Activated T-helper 1 cell treated with anti-CD3 and anti-CD28 coated beads, Interleukin-12 subunit alpha, Interleukin-12 subunit beta, Interleukin-2, Interleukin-4 antibody, amounts not matched to agents 30 ng/mL and 10 ng/mL and 1 ng/mL, durations not matched to agents 14 hours and 24 hours and 36 hours (primary cell): ENCODE measurements at regions of chr1 and their contacts with region 1.

Region 1: GRCh38 chr1:39711104-39711965 is 20.1 kb upstream of the HPCAL4 start:
- DNase-seq: no peak
- H3K4me3 Mint-ChIP-seq: no peak overlapping the region
- H3K27ac Mint-ChIP-seq: no peak overlapping the region
- H3K4me1 Mint-ChIP-seq: no peaks in the 10 kb centered on the region
- H3K27me3 Mint-ChIP-seq: peaks cover 19% of the 10 kb centered on the region

Region 2: GRCh38 chr1:38915352-38915948 is 795.9 kb before region 1 on chr1:
- intact Hi-C with region 1: no loop called
- DNase-seq: no peak
- H3K4me3 Mint-ChIP-seq: no peak overlapping the region
- H3K27ac Mint-ChIP-seq: no peak overlapping the region
- H3K4me1 Mint-ChIP-seq: no peaks in the 10 kb centered on the region
- H3K27me3 Mint-ChIP-seq: no peaks in the 10 kb centered on the region

Region 3: GRCh38 chr1:39098546-39099250 is 612.6 kb before region 1 on chr1:
- intact Hi-C with region 1: loop called (anchors 10 kb)
- DNase-seq: peak; percentile 53
- H3K4me3 Mint-ChIP-seq: no peak overlapping the region
- H3K27ac Mint-ChIP-seq: peak overlapping the region; percentile 40
- H3K4me1 Mint-ChIP-seq: peaks cover 30% of the 10 kb centered on the region
- H3K27me3 Mint-ChIP-seq: peaks cover under 1% of the 10 kb centered on the region

Region 4: GRCh38 chr1:39238476-39238875 is 472.9 kb before region 1 on chr1:
- intact Hi-C with region 1: no loop called
- DNase-seq: no peak
- H3K4me3 Mint-ChIP-seq: no peak overlapping the region
- H3K27ac Mint-ChIP-seq: peak overlapping the region; percentile 75
- H3K4me1 Mint-ChIP-seq: peaks cover 29% of the 10 kb centered on the region
- H3K27me3 Mint-ChIP-seq: no peaks in the 10 kb centered on the region

Region 5: GRCh38 chr1:39691262-39692151 is 19.8 kb before region 1 on chr1 and contains the start of gene HPCAL4:
- intact Hi-C with region 1: no loop called
- DNase-seq: peak; percentile 88
- H3K4me3 Mint-ChIP-seq: peak within 1 kb of the TSS; percentile 83
- H3K27ac Mint-ChIP-seq: no peak within 1 kb of the TSS
- H3K4me1 Mint-ChIP-seq: peaks cover 44% of the 10 kb centered on the region
- H3K27me3 Mint-ChIP-seq: peaks cover 33% of the 10 kb centered on the region
- total RNA-seq, gene HPCAL4: 0.69 and 0.75 TPM in 2 replicates